Activated T-helper 1 cell treated with anti-CD3 and anti-CD28 coated beads, Interleukin-12 subunit alpha, Interleukin-12 subunit beta, Interleukin-2, Interleukin-4 antibody, amounts not matched to agents 30 ng/mL and 10 ng/mL and 1 ng/mL, durations not matched to agents 14 hours and 24 hours and 36 hours (primary cell): ENCODE measurements at regions of chr15 and their contacts with region 1.

Region 1: DNA sequence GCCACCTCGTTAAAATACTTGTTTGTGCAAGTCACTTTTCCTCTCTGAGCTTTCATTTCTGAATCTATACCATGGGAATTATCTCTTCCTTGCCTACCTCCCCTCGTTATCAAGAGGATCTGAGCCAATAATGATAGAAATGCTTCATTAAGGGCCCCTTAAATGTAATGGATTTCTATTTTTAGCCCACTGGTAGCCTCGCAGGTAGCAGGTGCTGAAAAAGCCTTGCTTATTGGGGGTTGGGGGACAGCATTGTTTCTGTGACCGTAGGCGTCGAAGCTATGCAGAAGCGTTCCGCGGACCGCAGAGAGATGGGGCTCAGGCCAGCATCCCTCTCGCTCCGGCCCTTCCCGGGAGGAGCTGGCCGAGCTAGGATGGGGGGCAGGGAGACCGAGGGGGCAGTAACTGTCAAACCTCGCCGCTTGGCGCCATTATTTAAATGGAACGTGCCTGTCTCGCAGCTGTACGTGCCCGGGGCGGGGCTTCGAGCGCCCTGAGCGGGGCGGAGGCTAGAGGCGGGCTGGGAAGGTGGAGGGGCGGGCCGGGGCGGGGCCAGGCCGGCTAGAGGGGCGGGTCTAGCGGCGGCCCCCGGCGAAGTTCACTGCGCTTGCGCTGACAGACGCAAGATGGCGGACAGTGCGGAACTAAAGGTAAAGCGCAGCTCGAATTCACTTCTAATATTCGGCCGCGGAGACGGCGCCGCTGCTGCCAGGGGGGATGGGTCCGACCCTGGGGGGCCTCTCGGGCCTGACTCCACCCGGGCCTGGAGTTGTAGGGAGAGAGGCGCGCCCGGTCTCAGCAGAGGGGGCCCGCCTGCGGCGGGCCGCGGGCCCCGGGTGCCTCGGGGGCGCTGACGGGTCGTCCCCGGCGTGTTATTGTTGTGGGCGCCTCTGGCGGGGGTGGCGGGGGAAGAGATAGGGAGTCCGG is at the start of gene PIAS1:
- DNase-seq: peak; percentile 90
- H3K4me3 Mint-ChIP-seq: peak within 1 kb of the TSS; percentile 96
- H3K27ac Mint-ChIP-seq: peak within 1 kb of the TSS; percentile 94
- H3K4me1 Mint-ChIP-seq: peaks cover 50% of the 10 kb centered on the region
- H3K27me3 Mint-ChIP-seq: no peaks in the 10 kb centered on the region
- total RNA-seq, gene PIAS1: 26.4 and 26.8 TPM in 2 replicates

Region 2: DNA sequence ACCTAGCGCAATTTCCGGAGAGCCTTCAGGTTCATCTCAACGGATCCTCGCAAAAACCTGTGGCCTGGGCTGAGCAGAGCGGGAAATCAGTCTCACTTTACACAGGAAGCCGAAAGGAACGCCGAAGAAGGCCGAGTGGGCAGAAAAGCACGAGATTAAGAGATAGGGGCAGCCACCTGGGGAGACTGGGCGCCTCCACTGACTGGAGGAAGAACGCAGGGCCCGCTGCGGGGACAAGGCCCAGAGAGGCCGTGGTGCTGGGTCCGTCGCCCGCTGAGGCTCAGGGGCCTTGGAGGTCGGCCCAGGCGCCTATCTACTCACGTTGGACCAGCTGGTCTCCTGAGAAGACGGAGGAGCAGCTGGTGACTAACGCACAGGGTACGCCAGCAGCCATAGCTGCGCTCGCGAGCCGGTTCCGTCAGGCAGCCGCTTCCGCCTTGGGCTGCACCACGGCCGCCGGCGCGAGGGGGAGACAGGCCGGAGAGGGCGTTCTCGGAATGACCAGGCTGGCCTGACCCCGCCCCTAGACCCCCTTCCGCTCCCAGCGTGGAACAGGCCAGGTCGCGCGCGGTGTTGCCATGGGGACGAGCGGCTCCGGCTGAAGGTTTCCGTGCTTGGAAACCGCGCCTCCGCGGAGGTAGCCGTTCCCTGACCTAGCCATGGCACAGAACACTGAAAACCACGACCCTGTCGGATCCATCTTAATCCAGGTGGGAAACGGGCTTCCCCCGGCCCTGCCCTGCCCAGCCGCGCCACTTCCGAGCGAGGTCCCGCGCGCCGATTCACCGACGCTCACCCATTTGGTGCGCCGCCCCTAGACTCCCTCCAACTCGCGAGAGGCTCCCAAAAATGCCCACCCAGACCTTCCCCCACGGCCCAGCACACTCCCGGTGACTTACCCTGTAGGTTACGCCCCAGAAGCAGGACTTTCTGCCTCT is 799.5 kb before region 1 on chr15 and contains the starts of genes AAGAB and IQCH:
- intact Hi-C with region 1: loop called (anchors 10 kb)
- DNase-seq: peak; percentile 98
- H3K4me3 Mint-ChIP-seq: peak within 1 kb of the TSS; percentile 100
- H3K27ac Mint-ChIP-seq: peak within 1 kb of the TSS; percentile 98
- H3K4me1 Mint-ChIP-seq: peaks cover 36% of the 10 kb centered on the region
- H3K27me3 Mint-ChIP-seq: peaks cover 18% of the 10 kb centered on the region
- total RNA-seq, gene AAGAB: 41.7 and 44.0 TPM in 2 replicates
- total RNA-seq, gene IQCH: 0.88 and 1.2 TPM in 2 replicates

Region 3: GRCh38 chr15:67863442-67863987 is 190.4 kb before region 1 on chr15:
- intact Hi-C with region 1: loop called (anchors 5 kb)
- DNase-seq: peak; percentile 56
- H3K4me3 Mint-ChIP-seq: peak overlapping the region; percentile 65
- H3K27ac Mint-ChIP-seq: no peak overlapping the region
- H3K4me1 Mint-ChIP-seq: peaks cover 6% of the 10 kb centered on the region
- H3K27me3 Mint-ChIP-seq: peaks cover 26% of the 10 kb centered on the region

Region 4: DNA sequence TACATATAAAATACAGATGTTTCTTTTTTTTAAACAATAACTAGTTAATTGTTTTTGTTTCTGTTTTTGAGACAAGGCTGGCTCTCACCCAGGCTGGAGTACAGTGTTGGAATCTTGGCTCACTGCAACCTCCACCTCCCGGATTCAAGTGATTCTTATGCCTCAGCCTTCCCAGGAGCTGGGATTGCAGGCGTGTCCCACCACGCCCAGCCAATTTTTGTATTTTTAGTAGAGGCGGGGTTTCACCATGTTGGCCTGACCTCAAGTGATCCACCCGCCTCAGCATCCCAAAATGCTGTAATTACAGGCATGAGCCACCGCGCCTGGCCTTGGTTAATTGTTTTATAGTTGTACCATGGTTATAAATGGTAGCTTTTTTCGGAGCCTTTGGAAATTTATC is 72.4 kb after region 1 on chr15:
- intact Hi-C with region 1: no loop called
- DNase-seq: no peak
- H3K4me3 Mint-ChIP-seq: no peak overlapping the region
- H3K27ac Mint-ChIP-seq: no peak overlapping the region
- H3K4me1 Mint-ChIP-seq: peaks cover 6% of the 10 kb centered on the region
- H3K27me3 Mint-ChIP-seq: no peaks in the 10 kb centered on the region

Region 5: GRCh38 chr15:68229386-68230156 is 175.6 kb after region 1 on chr15 and contains the start of gene CLN6:
- intact Hi-C with region 1: loop called (anchors 1 kb)
- DNase-seq: peak; percentile 73
- H3K4me3 Mint-ChIP-seq: peak within 1 kb of the TSS; percentile 94
- H3K27ac Mint-ChIP-seq: peak within 1 kb of the TSS; percentile 96
- H3K4me1 Mint-ChIP-seq: peaks cover 40% of the 10 kb centered on the region
- H3K27me3 Mint-ChIP-seq: no peaks in the 10 kb centered on the region
- total RNA-seq, gene CLN6: 95.3 and 98.3 TPM in 2 replicates

Region 6: GRCh38 chr15:68820295-68821189 is 766.6 kb after region 1 on chr15 and contains the start of gene ANP32A:
- intact Hi-C with region 1: loop called (anchors 10 kb)
- DNase-seq: peak; percentile 94
- H3K4me3 Mint-ChIP-seq: peak within 1 kb of the TSS; percentile 98
- H3K27ac Mint-ChIP-seq: peak within 1 kb of the TSS; percentile 100
- H3K4me1 Mint-ChIP-seq: peaks cover 40% of the 10 kb centered on the region
- H3K27me3 Mint-ChIP-seq: no peaks in the 10 kb centered on the region
- total RNA-seq, gene ANP32A: 275 TPM in 2 replicates